Caco-2 (cell line): ENCODE measurements at regions of chr1 and their contacts with region 1.

Region 1: DNA sequence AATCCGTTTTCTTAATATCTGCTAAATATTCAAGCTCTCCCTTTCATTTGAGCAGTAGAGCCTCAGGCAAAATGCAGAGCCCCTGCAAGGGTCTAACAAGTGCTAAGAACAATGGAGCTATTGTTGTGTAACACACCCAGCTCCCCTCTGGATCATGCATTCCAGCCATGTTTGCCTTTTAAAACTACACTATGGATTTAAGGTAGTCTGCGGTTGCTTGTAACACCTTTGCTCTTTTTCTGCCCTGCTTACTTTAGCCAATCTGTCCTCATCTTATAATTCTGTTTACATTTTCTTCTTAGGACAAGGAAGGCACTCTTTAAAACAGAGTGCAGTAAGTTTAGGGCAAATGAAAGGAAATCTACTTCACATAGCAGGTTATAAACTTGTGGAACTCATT is 60.0 kb upstream of the C1orf105 start:
- DNase-seq: peak; percentile 57 to 80
- H3K4me3 ChIP-seq: no peak overlapping the region
- H3K4me3 Mint-ChIP-seq: peak overlapping the region; percentile 43
- H3K27ac Mint-ChIP-seq: peak overlapping the region; percentile 89
- H3K4me1 ChIP-seq: peaks cover 77% of the 10 kb centered on the region
- H3K4me1 Mint-ChIP-seq: peaks cover 30% of the 10 kb centered on the region
- H3K27me3 ChIP-seq: no peaks in the 10 kb centered on the region
- H3K27me3 Mint-ChIP-seq: no peaks in the 10 kb centered on the region
- CTCF ChIP-seq: no peak

Region 2: GRCh38 chr1:172177840-172178239 is 182.7 kb before region 1 on chr1:
- CTCF ChIA-PET with region 1: no interaction called
- POLR2A ChIA-PET with region 1: no interaction called
- intact Hi-C with region 1: loop called (anchors 5 kb)
- DNase-seq: peak in 1 of 2 experiments; percentile 49
- H3K4me3 ChIP-seq: no peak overlapping the region
- H3K4me3 Mint-ChIP-seq: no peak overlapping the region
- H3K27ac Mint-ChIP-seq: peak overlapping the region; percentile 12
- H3K4me1 ChIP-seq: peaks cover 48% of the 10 kb centered on the region
- H3K4me1 Mint-ChIP-seq: peaks cover 28% of the 10 kb centered on the region
- H3K27me3 ChIP-seq: no peaks in the 10 kb centered on the region
- H3K27me3 Mint-ChIP-seq: no peaks in the 10 kb centered on the region
- CTCF ChIP-seq: no peak

Region 3: DNA sequence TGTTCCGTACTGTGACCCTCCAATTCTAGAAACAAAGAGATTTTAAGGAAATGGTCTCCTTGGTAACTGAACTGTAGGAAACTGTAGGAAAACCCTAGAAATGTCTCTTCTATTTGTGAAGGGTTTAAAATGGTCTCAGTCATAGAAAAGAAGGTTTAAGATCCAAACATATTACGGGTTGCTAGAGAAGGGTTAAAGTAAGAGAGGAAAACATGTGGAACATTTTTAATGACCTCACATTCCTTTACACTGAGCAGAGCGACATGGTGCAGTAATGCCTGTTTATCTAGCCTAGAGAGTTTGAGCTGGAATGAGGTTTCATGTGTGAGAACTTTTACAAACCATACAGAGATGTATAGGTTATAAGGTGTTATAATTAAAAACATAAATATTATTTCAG is 23.0 kb after region 1 on chr1:
- CTCF ChIA-PET with region 1: no interaction called
- POLR2A ChIA-PET with region 1: no interaction called
- intact Hi-C with region 1: loop called (anchors 2 kb)
- DNase-seq: no peak
- H3K4me3 ChIP-seq: no peak overlapping the region
- H3K4me3 Mint-ChIP-seq: no peak overlapping the region
- H3K27ac Mint-ChIP-seq: no peak overlapping the region
- H3K4me1 ChIP-seq: peaks cover 6% of the 10 kb centered on the region; the same call in 1 of the 2 replicates
- H3K4me1 Mint-ChIP-seq: peaks cover 6% of the 10 kb centered on the region
- H3K27me3 ChIP-seq: no peaks in the 10 kb centered on the region
- H3K27me3 Mint-ChIP-seq: no peaks in the 10 kb centered on the region
- CTCF ChIP-seq: no peak